Body of pancreas (tissue), 4 donors: ENCODE measurements at regions of chr1 and their contacts with region 1.

Region 1: DNA sequence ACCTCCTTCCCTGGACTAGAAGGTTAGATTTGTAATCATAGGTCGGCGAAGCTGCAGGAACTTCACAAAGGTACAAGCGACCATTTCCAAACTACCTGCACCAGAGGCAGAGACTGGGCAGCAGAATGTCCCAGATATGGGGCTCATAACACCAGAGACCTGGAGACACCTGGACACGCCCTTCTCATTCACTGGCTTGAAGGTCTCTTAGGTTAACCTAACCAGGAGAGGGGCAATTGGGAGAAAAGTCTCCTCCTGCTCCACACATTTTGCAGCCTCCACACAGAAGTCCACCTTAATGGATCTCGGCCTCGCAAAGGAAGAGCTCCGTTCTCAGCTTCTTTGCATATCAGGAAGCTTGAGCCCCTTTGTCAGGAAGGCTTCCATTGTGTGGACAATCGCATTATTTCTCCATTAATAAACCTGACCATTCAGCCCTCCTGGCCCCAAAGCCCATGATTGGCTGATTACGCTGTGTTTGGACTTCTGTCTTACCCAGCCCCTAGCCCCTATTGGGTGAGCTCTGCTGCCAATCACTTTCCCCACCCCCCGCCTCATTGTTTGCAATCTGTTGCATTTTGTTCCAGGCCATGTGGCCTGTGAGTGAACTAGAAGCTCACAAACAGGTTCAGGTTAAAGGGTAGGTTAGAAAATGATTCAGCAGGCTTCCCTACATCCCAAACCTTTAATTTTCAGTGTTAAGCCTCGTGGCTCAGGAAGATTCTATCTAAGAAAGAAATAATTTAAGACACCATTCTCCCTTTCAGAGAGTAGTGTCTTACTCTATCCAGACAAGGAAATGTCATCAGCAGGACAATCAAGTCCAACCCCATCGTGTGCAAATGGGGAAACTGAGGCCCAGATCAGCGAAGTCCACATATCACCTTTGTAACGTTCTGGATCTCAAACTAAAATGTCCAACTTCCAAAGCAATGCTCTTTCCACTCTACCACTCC is 2.8 kb downstream of the MYCL start:
- DNase-seq: peak; percentile 86 to 90 (median 87)
- ATAC-seq: peak; percentile 55
- H3K4me3 ChIP-seq: no peak overlapping the region
- H3K27ac ChIP-seq: peak overlapping the region in 1 of 4 donors; percentile 15
- H3K4me1 ChIP-seq: peaks cover 62% of the 10 kb centered on the region
- H3K27me3 ChIP-seq: no peaks in the 10 kb centered on the region
- CTCF ChIP-seq: no peak
- POLR2A ChIP-seq: peak in 2 of 3 donors; percentile 23 to 38

Region 2: GRCh38 chr1:39822091-39822490 is 76.8 kb before region 1 on chr1:
- intact Hi-C with region 1: loop called (anchors 5 kb)
- DNase-seq: no peak
- ATAC-seq: no peak
- H3K4me3 ChIP-seq: no peak overlapping the region
- H3K27ac ChIP-seq: no peak overlapping the region
- H3K4me1 ChIP-seq: peaks cover 30% of the 10 kb centered on the region
- H3K27me3 ChIP-seq: no peaks in the 10 kb centered on the region
- CTCF ChIP-seq: no peak
- POLR2A ChIP-seq: no peak